K562 (cell line): ENCODE measurements at regions of chr12 and their contacts with region 1.

Region 1: GRCh38 chr12:124940549-124941527 is 26.4 kb upstream of the UBC start:
- DNase-seq: peak; percentile 82 to 97 (median 86)
- ATAC-seq: peak; percentile 84
- H3K4me3 ChIP-seq: peak overlapping the region; percentile 54
- H3K27ac ChIP-seq: peak overlapping the region; percentile 87
- H3K4me1 ChIP-seq: peaks cover 9 to 12% of the 10 kb centered on the region in 2 experiments; a peak in 3 of 5 replicates
- H3K27me3 ChIP-seq: no peaks in the 10 kb centered on the region
- CTCF ChIP-seq: peak; percentile 98 to 99 (median 98)
- EP300 ChIP-seq: peak; percentile 56
- POLR2A ChIP-seq: peak; percentile 69
- RAD21 ChIP-seq: peak; percentile 47 to 61

Region 2: DNA sequence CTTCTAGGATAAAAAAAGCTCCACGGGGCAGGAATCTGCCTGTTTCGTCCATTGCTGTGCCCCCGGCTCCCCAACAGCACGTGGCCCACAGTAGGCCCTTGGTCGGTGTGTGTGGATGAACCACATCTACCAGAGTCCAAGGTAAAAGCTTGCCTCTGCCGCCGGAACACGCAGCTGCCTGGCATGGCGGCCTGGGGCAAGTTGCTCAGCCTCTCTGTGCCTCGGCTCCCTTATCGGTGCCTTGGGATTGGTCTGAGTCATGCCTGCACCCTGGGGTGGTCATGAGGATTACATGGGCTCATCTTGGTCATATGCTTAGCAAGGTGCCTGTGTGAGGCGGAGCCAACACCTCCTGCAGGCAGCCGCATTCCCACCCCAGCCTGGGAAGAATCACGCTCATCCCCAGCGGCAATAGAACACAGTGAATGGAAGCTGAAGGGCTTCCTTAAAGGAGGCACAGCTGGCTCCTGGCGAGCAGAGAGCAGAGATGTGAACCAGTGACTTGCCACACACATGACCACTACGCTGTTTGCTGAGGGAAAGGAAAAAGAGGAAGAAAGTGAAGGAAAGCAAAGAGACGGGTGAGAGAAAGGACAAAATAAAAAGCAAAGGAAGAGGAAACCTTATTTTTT is 71.7 kb before region 1 on chr12:
- CTCF ChIA-PET with region 1: no interaction called
- POLR2A ChIA-PET with region 1: no interaction called
- in situ Hi-C with region 1: no loop called
- intact Hi-C with region 1: loop called (anchors 1 kb)
- DNase-seq: peak; percentile 82 to 85 (median 84)
- ATAC-seq: peak; percentile 80
- H3K4me3 ChIP-seq: peak overlapping the region; percentile 14
- H3K27ac ChIP-seq: peak overlapping the region; percentile 86; the same call in 2 of the 3 replicates
- H3K4me1 ChIP-seq: peaks cover 39 to 43% of the 10 kb centered on the region in 2 experiments
- H3K27me3 ChIP-seq: no peaks in the 10 kb centered on the region
- CTCF ChIP-seq: no peak
- EP300 ChIP-seq: no peak
- POLR2A ChIP-seq: peak; percentile 55; the same call in 1 of the 2 replicates
- RAD21 ChIP-seq: no peak

Region 3: GRCh38 chr12:124881123-124881522 is 59.7 kb before region 1 on chr12:
- CTCF ChIA-PET with region 1: no interaction called
- POLR2A ChIA-PET with region 1: no interaction called
- in situ Hi-C with region 1: no loop called
- intact Hi-C with region 1: no loop called
- DNase-seq: no peak
- ATAC-seq: no peak
- H3K4me3 ChIP-seq: no peak overlapping the region
- H3K27ac ChIP-seq: no peak overlapping the region
- H3K4me1 ChIP-seq: peaks cover 33 to 44% of the 10 kb centered on the region in 2 experiments
- H3K27me3 ChIP-seq: no peaks in the 10 kb centered on the region
- CTCF ChIP-seq: no peak
- EP300 ChIP-seq: no peak
- POLR2A ChIP-seq: no peak
- RAD21 ChIP-seq: no peak

Region 4: GRCh38 chr12:124927201-124928094 is 13.4 kb before region 1 on chr12:
- CTCF ChIA-PET with region 1: no interaction called
- POLR2A ChIA-PET with region 1: interaction called, 12 read pairs
- in situ Hi-C with region 1: no loop called
- intact Hi-C with region 1: loop called (anchors 1 kb)
- DNase-seq: peak; percentile 78 to 92 (median 85)
- ATAC-seq: peak; percentile 80
- H3K4me3 ChIP-seq: peak overlapping the region; percentile 64
- H3K27ac ChIP-seq: peak overlapping the region; percentile 90
- H3K4me1 ChIP-seq: peaks cover 16 to 19% of the 10 kb centered on the region in 2 experiments; a peak in 4 of 5 replicates
- H3K27me3 ChIP-seq: no peaks in the 10 kb centered on the region
- CTCF ChIP-seq: peak in 1 of 3 experiments; percentile 10; a peak in 1 of 6 replicates
- EP300 ChIP-seq: peak; percentile 73
- POLR2A ChIP-seq: no peak
- RAD21 ChIP-seq: 0 out of 4 replicates have a peak, but pooled peaks of 1 of the 2 experiments have one; percentile 10

Region 5: GRCh38 chr12:124993626-124994435 is 53.0 kb after region 1 on chr12 and contains the start of gene BRI3BP:
- CTCF ChIA-PET with region 1: no interaction called
- POLR2A ChIA-PET with region 1: no interaction called
- in situ Hi-C with region 1: no loop called
- intact Hi-C with region 1: loop called (anchors 2 kb)
- DNase-seq: peak; percentile 51 to 87 (median 72)
- ATAC-seq: peak; percentile 75
- H3K4me3 ChIP-seq: peak within 1 kb of the TSS; percentile 83
- H3K27ac ChIP-seq: peak within 1 kb of the TSS; percentile 82
- H3K4me1 ChIP-seq: peaks cover 18 to 31% of the 10 kb centered on the region in 2 experiments
- H3K27me3 ChIP-seq: no peaks in the 10 kb centered on the region
- CTCF ChIP-seq: no peak; a peak in 1 of 6 replicates
- EP300 ChIP-seq: no peak
- POLR2A ChIP-seq: peak; percentile 45; the same call in 1 of the 2 replicates
- RAD21 ChIP-seq: no peak
- polyA plus RNA-seq, gene BRI3BP: 12.3 to 16.6 TPM